ENCODE measurements at regions of chr1 and their contacts with region 1.

Region 1: DNA sequence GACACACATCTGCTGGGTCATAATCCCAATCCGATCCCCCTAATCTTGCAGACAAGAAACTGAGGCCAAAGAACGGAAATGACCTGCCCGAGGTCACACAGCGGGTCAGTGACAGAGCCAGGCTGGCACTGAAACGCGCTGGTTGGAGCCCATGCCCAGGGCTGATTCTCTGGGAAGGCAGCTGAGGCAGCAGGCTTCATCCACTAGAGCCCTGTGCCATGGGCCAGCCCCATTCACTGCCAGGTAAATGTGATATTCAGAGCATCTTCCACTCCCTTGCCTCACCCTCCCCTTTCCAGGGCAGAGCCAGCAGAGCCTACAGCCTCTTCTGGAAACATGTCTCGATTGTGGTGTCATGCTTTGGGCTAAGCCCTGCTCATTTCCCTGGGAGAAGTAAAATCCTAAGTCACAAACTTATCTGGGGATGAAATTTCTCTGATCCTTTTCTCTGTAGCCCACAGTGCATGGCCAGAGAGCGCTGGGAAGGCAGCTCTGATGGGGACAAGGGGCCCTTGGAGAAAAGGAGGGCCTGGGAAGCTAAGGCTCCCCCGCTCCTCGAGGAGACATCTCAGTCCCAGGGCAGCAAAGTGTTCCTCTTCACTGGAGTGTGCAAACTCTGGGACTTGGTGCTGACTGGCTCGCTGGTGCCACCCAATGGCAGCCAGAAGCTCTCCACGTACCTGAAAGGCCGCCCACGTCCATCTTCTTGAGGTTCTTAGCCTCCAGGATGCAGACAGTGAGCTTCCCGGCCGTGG is 110.4 kb downstream of the SYT2 start:
- H3K4me3 Mint-ChIP-seq: no peak overlapping the region
- H3K27ac Mint-ChIP-seq: no peak overlapping the region
- H3K4me1 Mint-ChIP-seq: peaks cover 14% of the 10 kb centered on the region
- H3K27me3 Mint-ChIP-seq: peaks cover 100% of the 10 kb centered on the region

Region 2: DNA sequence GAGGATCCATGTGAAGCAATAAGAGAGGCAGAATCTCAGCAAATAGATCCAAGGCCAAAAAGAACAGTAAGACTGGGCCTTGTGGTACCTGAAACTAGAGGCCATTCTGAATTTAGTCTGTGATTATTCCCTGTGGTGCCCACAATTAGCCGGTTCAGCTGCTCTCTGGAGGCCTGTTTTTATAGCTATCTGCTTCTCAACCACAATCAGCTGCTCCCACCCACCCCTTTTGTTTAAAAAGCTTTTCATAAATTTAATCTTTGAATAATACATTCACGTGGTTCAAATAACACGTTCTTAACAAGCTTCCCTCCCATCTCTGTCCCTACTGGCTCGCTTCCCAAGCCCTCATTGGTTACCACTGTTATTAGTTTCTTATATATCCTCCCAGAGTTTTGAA is 276.1 kb before region 1 on chr1:
- intact Hi-C with region 1: no loop called
- H3K4me3 Mint-ChIP-seq: no peak overlapping the region
- H3K27ac Mint-ChIP-seq: no peak overlapping the region
- H3K4me1 Mint-ChIP-seq: peaks cover 5% of the 10 kb centered on the region
- H3K27me3 Mint-ChIP-seq: peaks cover 10% of the 10 kb centered on the region

Region 3: DNA sequence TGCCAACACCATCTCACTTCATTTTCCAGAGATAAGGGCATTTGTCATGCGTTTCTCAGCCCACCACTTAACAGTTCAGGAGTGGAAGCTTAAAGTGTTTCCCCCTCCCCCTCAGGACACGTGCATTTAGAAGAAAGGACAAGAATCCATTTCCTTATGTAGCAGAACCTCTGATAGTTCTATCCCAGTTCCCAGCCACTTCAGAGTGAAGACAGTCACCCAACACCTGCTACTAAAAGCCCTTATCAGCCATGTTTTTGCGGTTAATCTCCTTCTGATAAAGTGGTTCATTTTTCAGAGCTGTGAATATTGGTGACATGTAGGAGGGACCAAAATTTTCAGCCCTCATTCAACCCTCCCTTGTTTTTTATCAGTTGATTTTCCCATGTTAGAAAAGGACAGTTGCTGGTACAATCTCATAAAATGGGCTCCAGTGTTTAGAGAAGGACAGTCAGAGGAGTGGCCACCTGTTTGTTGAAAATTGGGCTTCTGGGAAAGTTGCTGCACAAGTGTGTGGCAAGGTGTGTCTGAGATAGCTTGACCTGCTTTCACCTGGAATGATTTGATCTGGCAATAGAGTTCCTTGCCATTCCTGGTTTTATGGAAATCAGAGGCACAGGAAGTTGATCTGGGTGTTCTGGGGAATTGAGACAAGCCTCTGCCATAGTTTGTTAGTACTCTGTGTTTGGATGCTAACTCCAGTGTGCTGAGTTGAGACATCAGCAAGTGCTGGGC is 137.3 kb before region 1 on chr1:
- intact Hi-C with region 1: loop called (anchors 10 kb)
- H3K4me3 Mint-ChIP-seq: no peak overlapping the region
- H3K27ac Mint-ChIP-seq: no peak overlapping the region
- H3K4me1 Mint-ChIP-seq: peaks cover 5% of the 10 kb centered on the region
- H3K27me3 Mint-ChIP-seq: peaks cover 51% of the 10 kb centered on the region